MCF 10A (cell line): ENCODE measurements at regions of chr14 and their contacts with region 1.

Region 1: GRCh38 chr14:43795600-43796228 is 711.4 kb downstream of the FSCB start:
- DNase-seq: peak; percentile 35
- H3K4me3 Mint-ChIP-seq: no peak overlapping the region
- H3K27ac Mint-ChIP-seq: no peak overlapping the region
- H3K4me1 Mint-ChIP-seq: no peaks in the 10 kb centered on the region
- H3K27me3 Mint-ChIP-seq: no peaks in the 10 kb centered on the region
- CTCF ChIP-seq: peak; percentile 61

Region 2: DNA sequence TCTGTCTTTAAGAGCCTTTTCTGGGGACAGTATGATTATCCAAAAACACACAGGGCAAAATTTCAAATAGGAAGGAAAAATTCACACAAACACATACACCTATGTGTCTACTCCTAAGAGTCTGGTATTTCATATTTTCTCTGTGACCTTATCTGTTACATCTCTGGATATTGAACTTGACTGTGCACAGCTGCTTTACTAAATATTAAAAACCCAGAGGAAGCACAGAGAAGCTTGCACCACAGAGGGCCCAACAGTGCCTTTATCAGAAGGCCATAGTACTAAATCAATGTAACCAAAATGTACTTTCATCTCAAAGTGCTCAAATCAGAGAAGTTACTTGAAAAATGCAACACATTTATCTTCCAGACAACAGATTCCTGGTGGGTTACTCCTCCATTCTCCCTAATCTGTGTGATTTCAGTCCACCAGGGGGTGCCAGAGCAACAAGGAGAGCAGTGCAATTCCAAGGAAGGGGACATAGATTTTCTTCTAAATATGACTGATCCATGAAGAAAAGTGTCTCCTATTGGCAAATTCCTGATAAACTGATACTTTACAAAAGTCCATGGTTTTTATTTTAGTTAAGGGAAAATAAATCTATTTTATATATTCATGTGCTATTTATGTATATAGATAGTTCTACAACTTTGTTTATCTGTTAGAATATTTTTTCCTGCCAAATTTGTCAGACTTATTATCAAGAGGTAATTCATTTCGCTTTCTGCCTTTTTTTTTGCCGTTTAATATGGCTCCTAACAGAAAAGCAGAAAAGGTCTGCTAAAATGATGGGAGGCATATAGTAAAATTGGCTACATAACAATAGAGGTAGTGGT is 1571.4 kb before region 1 on chr14:
- CTCF ChIA-PET with region 1: no interaction called
- POLR2A ChIA-PET with region 1: no interaction called
- intact Hi-C with region 1: loop called (anchors 1 kb)
- DNase-seq: peak; percentile 85
- H3K4me3 Mint-ChIP-seq: no peak overlapping the region
- H3K27ac Mint-ChIP-seq: no peak overlapping the region
- H3K4me1 Mint-ChIP-seq: peaks cover 10% of the 10 kb centered on the region
- H3K27me3 Mint-ChIP-seq: no peaks in the 10 kb centered on the region
- CTCF ChIP-seq: peak; percentile 81

Region 3: DNA sequence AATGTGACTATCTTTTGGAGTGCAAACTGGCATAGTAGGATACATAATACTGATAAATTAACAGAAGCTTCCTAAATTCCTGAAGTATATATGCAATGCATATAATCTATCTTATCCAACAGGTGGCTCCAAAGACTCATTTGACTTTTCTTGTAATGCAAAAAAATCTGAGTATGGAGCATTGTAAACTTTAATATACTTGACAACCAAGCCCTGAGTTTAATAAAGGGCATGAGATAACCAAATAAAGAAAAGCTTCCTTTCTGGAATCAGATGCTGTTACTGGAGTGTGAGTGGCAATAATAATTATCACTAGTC is 292.2 kb before region 1 on chr14:
- CTCF ChIA-PET with region 1: interaction called, 34 read pairs
- POLR2A ChIA-PET with region 1: no interaction called
- intact Hi-C with region 1: loop called (anchors 1 kb)
- DNase-seq: peak; percentile 21
- H3K4me3 Mint-ChIP-seq: no peak overlapping the region
- H3K27ac Mint-ChIP-seq: no peak overlapping the region
- H3K4me1 Mint-ChIP-seq: peaks cover 2% of the 10 kb centered on the region
- H3K27me3 Mint-ChIP-seq: no peaks in the 10 kb centered on the region
- CTCF ChIP-seq: peak; percentile 48

Region 4: GRCh38 chr14:44657696-44658388 is 862.1 kb after region 1 on chr14:
- CTCF ChIA-PET with region 1: interaction called, 3 read pairs
- POLR2A ChIA-PET with region 1: interaction called, 3 read pairs
- intact Hi-C with region 1: loop called (anchors 1 kb)
- DNase-seq: peak; percentile 45
- H3K4me3 Mint-ChIP-seq: no peak overlapping the region
- H3K27ac Mint-ChIP-seq: no peak overlapping the region
- H3K4me1 Mint-ChIP-seq: peaks cover 21% of the 10 kb centered on the region
- H3K27me3 Mint-ChIP-seq: no peaks in the 10 kb centered on the region
- CTCF ChIP-seq: peak; percentile 50

Region 5: DNA sequence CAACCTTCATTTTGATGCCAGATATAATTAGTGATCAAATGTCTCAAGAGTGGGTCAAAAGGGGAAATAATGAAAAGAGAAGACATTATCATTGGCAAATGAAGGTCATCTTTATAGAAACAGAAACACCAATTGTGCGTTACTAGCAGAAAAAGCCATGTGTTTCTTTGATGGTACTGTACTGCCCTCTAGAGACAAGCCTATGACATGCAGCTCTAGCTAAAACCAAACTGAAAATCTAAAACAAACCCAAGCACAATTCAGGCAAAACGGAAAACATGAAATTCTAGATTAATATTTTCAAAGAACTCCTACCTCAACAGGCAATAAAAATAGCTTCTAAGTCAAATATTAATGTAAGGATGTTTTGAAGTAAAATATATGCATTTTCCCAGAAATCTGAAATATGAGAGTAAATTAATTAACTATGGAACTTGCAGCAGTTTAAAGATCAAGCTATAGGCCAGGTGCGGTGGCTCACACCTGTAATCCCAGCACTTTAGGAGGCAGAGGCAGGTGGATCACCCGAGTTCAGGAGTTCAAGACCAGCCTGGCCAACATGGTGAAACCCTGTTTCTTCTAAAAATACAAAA is 1050.6 kb after region 1 on chr14:
- CTCF ChIA-PET with region 1: interaction called, 5 read pairs
- POLR2A ChIA-PET with region 1: no interaction called
- intact Hi-C with region 1: loop called (anchors 5 kb)
- DNase-seq: peak; percentile 65
- H3K4me3 Mint-ChIP-seq: no peak overlapping the region
- H3K27ac Mint-ChIP-seq: no peak overlapping the region
- H3K4me1 Mint-ChIP-seq: no peaks in the 10 kb centered on the region
- H3K27me3 Mint-ChIP-seq: no peaks in the 10 kb centered on the region
- CTCF ChIP-seq: peak; percentile 76